K562 (cell line): ENCODE measurements at regions of chr2 and their contacts with region 1.

Region 1: DNA sequence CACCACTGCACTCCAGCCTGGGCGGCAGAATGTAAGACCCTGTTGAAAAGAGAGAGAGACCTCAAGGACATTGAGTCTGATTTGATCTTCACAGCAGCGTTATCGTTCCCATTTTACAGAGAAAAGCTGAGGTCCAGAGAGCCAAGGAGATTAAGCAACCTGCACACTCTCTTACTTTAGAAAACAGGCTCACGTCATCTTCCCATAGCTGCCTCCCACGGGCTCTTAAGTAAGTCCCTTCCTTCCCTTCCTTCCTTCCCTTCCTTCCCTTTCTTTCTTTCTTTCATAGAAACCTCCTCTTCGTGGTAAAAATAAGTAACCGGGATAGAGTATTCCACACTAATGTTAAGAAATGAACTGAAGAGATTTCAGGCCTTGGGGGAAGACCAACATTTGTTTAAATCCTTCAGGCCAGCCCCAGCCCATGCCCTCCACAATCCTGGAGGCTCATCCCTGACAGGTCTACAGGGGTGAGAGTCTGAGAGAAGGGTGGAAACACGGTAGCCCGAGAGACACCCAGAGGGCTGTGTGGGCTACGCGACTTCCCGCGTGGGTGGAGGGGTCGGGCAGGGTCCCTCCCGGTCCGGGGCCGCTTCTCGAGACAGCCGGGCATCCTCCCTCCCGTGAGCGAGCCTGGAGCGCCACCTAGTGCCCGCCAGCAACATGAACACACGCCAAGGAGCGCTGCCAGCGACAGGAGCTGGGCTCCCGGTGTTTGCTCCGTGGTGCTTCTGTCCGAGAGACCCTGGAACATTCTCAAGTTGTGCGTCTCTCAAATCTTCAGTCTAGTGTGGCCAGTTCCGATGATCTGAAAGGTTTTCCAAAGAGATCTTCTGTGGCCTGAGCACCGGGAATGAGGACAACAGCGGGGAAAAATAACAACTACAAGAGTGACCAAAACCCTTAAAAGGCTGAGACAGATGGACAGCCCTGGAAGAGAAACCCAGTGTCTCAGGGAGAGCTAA is 160.3 kb downstream of the INO80D start:
- DNase-seq: peak; percentile 61 to 80 (median 74)
- ATAC-seq: peak; percentile 99
- H3K4me3 ChIP-seq: no peak overlapping the region
- H3K27ac ChIP-seq: no peak overlapping the region
- H3K4me1 ChIP-seq: peaks cover 0 to 5% of the 10 kb centered on the region in 2 experiments; a peak in 1 of 5 replicates
- H3K27me3 ChIP-seq: peaks cover 3 to 30% of the 10 kb centered on the region in 2 experiments; a peak in 3 of 5 replicates
- CTCF ChIP-seq: peak; percentile 75 to 85 (median 80)
- EP300 ChIP-seq: no peak
- POLR2A ChIP-seq: no peak
- RAD21 ChIP-seq: peak; percentile 75 to 86

Region 2: GRCh38 chr2:205776139-205776538 is 149.5 kb before region 1 on chr2:
- CTCF ChIA-PET with region 1: interaction called, 6 read pairs
- POLR2A ChIA-PET with region 1: no interaction called
- in situ Hi-C with region 1: loop called (anchors 10 kb)
- intact Hi-C with region 1: loop called (anchors 2 kb)
- DNase-seq: peak; percentile 45 to 71 (median 61)
- ATAC-seq: peak; percentile 95
- H3K4me3 ChIP-seq: no peak overlapping the region
- H3K27ac ChIP-seq: no peak overlapping the region
- H3K4me1 ChIP-seq: peaks cover 0 to 3% of the 10 kb centered on the region in 2 experiments; a peak in 1 of 5 replicates
- H3K27me3 ChIP-seq: peaks cover 0 to 4% of the 10 kb centered on the region in 2 experiments; a peak in 1 of 5 replicates
- CTCF ChIP-seq: peak; percentile 62 to 73 (median 65)
- EP300 ChIP-seq: no peak
- POLR2A ChIP-seq: no peak
- RAD21 ChIP-seq: peak; percentile 54 to 64

Region 3: DNA sequence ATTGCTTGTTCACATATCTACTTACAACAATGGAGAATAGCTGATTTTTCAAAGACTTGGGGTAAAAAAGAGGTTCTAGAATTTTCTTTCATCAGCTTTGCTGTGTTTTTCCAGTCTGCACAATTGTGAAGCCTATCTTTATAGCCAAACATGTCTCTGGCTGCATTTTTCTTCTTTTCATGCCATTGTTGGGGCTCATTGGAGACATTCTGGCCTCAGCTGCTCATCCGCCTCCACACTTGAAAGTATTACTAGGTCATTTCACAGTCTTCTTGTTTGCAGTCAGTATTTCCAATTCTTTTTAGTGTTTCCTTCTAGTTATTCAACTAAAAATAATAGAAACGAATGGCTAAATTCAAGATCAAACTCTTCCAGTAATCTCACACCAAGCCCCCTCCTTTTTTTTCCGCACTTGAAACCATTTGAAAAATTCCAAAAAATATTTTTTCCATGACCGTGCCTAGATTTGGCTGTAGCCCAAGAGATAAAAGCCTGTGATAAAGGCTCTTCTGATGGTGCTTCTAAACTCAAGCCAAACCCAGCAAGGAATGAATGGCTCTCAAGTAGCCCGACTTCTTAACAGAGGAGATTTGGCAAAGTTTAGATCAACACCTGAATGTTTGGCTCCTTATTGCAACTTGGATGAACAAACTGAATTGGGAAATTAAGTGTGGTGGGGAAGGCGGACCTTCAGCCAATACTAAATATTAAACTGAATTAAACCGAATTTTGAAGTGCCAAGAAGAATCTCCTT is 140.0 kb before region 1 on chr2:
- CTCF ChIA-PET with region 1: no interaction called
- POLR2A ChIA-PET with region 1: no interaction called
- in situ Hi-C with region 1: loop called (anchors 10 kb)
- intact Hi-C with region 1: no loop called
- DNase-seq: no peak
- ATAC-seq: no peak
- H3K4me3 ChIP-seq: no peak overlapping the region
- H3K27ac ChIP-seq: no peak overlapping the region
- H3K4me1 ChIP-seq: no peaks in the 10 kb centered on the region
- H3K27me3 ChIP-seq: no peaks in the 10 kb centered on the region; a peak in 1 of 5 replicates
- CTCF ChIP-seq: no peak
- EP300 ChIP-seq: no peak
- POLR2A ChIP-seq: no peak
- RAD21 ChIP-seq: no peak